Naive thymus-derived CD4-positive, alpha-beta T cell (primary cell): ENCODE measurements at regions of chr3 and their contacts with region 1.

Region 1: GRCh38 chr3:52444860-52445793 is at the start of gene SEMA3G:
- DNase-seq: peak; percentile 39 to 78 (median 63)
- ATAC-seq: peak; percentile 94
- H3K4me3 ChIP-seq: no peak within 1 kb of the TSS
- H3K4me3 Mint-ChIP-seq: no peak within 1 kb of the TSS
- H3K27ac ChIP-seq: no peak within 1 kb of the TSS
- H3K27ac Mint-ChIP-seq: peak within 1 kb of the TSS in 1 of 9 donors; percentile 59
- H3K4me1 ChIP-seq: peaks cover 0 to 9% of the 10 kb centered on the region in 2 donors
- H3K4me1 Mint-ChIP-seq: peaks cover 6 to 13% (median 9%) of the 10 kb centered on the region in 7 donors
- H3K27me3 ChIP-seq: no peaks in the 10 kb centered on the region
- H3K27me3 Mint-ChIP-seq: no peaks in the 10 kb centered on the region
- total RNA-seq, gene SEMA3G: 0.10 to 0.24 TPM in 2 of 5 experiments, not detected in the others

Region 2: GRCh38 chr3:52001443-52001974 is 443.6 kb before region 1 on chr3:
- CTCF ChIA-PET with region 1: interaction called, 6 read pairs
- POLR2A ChIA-PET with region 1: no interaction called
- intact Hi-C with region 1: loop called in 1 of 2 experiments (anchors 1 kb)
- DNase-seq: peak; percentile 73 to 86 (median 81)
- ATAC-seq: peak; percentile 98
- H3K4me3 ChIP-seq: no peak overlapping the region
- H3K4me3 Mint-ChIP-seq: peak overlapping the region in 2 of 10 donors; percentile 12 to 16
- H3K27ac ChIP-seq: no peak overlapping the region
- H3K27ac Mint-ChIP-seq: peak overlapping the region in 3 of 9 donors; percentile 8 to 41 (median 11)
- H3K4me1 ChIP-seq: peaks cover 6 to 22% of the 10 kb centered on the region in 2 donors
- H3K4me1 Mint-ChIP-seq: peaks cover 6 to 24% (median 16%) of the 10 kb centered on the region in 7 donors
- H3K27me3 ChIP-seq: no peaks in the 10 kb centered on the region
- H3K27me3 Mint-ChIP-seq: peaks cover 0 to 16% (median 0%) of the 10 kb centered on the region in 5 donors

Region 3: DNA sequence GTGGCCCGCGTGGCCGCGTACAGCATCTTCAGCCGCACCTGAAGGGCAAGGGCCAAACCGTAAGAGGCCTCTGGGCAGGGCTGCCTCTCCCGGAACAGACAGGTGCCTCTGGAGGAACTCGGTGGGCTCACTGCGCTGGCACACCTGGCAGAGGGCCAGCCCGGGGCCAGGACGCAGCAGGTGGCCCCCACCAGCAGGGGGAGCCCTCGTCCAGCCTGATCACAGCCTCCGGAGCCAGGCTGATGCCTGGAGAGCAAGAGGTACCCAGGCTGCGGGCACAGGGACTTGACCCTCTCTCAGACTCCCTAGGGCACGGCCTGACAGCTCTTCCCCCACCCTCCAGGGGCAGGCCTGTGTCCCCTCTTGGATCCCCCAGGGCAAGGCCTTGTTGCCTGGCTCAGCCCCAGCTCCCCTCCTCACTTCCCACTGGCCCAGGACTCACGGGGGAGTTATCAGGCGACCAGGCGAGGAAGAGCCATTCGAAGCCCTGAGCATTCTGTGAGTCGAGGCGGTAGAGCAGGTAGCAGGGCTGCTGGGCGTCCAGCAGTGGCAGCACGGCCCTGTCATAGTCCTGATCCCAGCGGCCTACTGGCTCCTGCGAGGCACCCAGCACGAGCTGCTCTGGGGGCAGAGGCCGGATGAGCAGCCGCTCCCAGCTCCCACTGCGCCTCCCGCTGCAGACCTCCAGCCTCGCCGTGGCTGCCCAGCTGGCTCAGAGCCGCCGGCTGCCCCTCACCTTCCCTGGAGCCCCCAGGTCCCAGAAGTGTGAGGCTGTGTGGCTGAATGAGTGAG is 213.4 kb before region 1 on chr3:
- CTCF ChIA-PET with region 1: interaction called, 4 read pairs
- POLR2A ChIA-PET with region 1: interaction called, 4 read pairs
- intact Hi-C with region 1: loop called in 1 of 2 experiments (anchors 1 kb)
- DNase-seq: peak; percentile 77 to 96 (median 88)
- ATAC-seq: peak; percentile 91
- H3K4me3 ChIP-seq: no peak overlapping the region
- H3K4me3 Mint-ChIP-seq: peak overlapping the region; percentile 20 to 69 (median 53)
- H3K27ac ChIP-seq: peak overlapping the region; percentile 42
- H3K27ac Mint-ChIP-seq: peak overlapping the region; percentile 32 to 88 (median 80)
- H3K4me1 ChIP-seq: peaks cover 22 to 35% of the 10 kb centered on the region in 2 donors
- H3K4me1 Mint-ChIP-seq: peaks cover 40 to 63% (median 58%) of the 10 kb centered on the region in 7 donors
- H3K27me3 ChIP-seq: no peaks in the 10 kb centered on the region
- H3K27me3 Mint-ChIP-seq: no peaks in the 10 kb centered on the region

Region 4: DNA sequence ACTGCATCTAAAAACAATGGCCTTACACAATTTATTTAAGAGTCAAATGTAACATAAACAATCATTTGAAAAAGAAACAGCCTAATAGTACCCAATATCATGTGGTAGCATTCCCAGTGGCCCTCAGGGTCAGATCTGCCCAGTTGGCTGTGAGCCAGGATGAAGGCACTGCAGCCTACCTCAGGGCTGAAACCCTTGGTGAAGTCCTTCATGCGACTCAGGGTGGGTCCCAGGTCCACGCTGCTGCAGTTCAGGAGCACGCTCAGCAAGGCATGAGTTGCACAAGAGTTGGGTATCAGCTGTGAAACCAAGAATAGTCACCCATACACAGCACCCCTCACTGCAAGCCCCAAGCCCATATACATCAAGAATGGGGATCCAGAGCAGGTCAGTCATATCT is 37.3 kb before region 1 on chr3:
- CTCF ChIA-PET with region 1: interaction called, 40 read pairs
- POLR2A ChIA-PET with region 1: interaction called, 5 read pairs
- intact Hi-C with region 1: loop called (anchors 1 kb)
- DNase-seq: no peak
- ATAC-seq: no peak
- H3K4me3 ChIP-seq: no peak overlapping the region
- H3K4me3 Mint-ChIP-seq: peak overlapping the region in 9 of 10 donors; percentile 12 to 97 (median 84)
- H3K27ac ChIP-seq: no peak overlapping the region
- H3K27ac Mint-ChIP-seq: peak overlapping the region in 7 of 9 donors; percentile 35 to 95 (median 88)
- H3K4me1 ChIP-seq: peaks cover 27 to 35% of the 10 kb centered on the region in 2 donors
- H3K4me1 Mint-ChIP-seq: peaks cover 27 to 42% (median 40%) of the 10 kb centered on the region in 7 donors
- H3K27me3 ChIP-seq: no peaks in the 10 kb centered on the region
- H3K27me3 Mint-ChIP-seq: peaks cover 0 to 1% (median 0%) of the 10 kb centered on the region in 5 donors

Region 5: GRCh38 chr3:52455283-52456168 is 10.4 kb after region 1 on chr3 and contains the start of gene NISCH:
- CTCF ChIA-PET with region 1: interaction called, 3 read pairs
- POLR2A ChIA-PET with region 1: interaction called, 9 read pairs
- intact Hi-C with region 1: loop called in 1 of 2 experiments (anchors 1 kb)
- DNase-seq: peak; percentile 92 to 99 (median 97)
- ATAC-seq: peak; percentile 98
- H3K4me3 ChIP-seq: peak within 1 kb of the TSS; percentile 98
- H3K4me3 Mint-ChIP-seq: peak within 1 kb of the TSS; percentile 87 to 96 (median 93)
- H3K27ac ChIP-seq: peak within 1 kb of the TSS; percentile 88
- H3K27ac Mint-ChIP-seq: peak within 1 kb of the TSS; percentile 96 to 100 (median 99)
- H3K4me1 ChIP-seq: peaks cover 15 to 23% of the 10 kb centered on the region in 2 donors
- H3K4me1 Mint-ChIP-seq: peaks cover 25 to 47% (median 41%) of the 10 kb centered on the region in 7 donors
- H3K27me3 ChIP-seq: no peaks in the 10 kb centered on the region
- H3K27me3 Mint-ChIP-seq: no peaks in the 10 kb centered on the region
- total RNA-seq, gene NISCH: 86.8 to 210 (median 162) TPM